H1 (cell line): ENCODE measurements at regions of chr2 and their contacts with region 1.

Region 1: GRCh38 chr2:158006961-158007719 is 94.5 kb upstream of the UPP2 start:
- DNase-seq: no peak
- H3K4me3 ChIP-seq: no peak overlapping the region
- H3K27ac ChIP-seq: no peak overlapping the region
- H3K4me1 ChIP-seq: peaks cover 0 to 7% (median 4%) of the 10 kb centered on the region in 4 experiments; a peak in 2 of 7 replicates
- H3K27me3 ChIP-seq: no peaks in the 10 kb centered on the region; a peak in 1 of 7 replicates
- CTCF ChIP-seq: peak in 2 of 3 experiments; percentile 30 to 41; a peak in 3 of 4 replicates
- EP300 ChIP-seq: no peak
- POLR2A ChIP-seq: no peak
- RAD21 ChIP-seq: peak; percentile 30 to 41; a peak in 2 of 4 replicates

Region 2: DNA sequence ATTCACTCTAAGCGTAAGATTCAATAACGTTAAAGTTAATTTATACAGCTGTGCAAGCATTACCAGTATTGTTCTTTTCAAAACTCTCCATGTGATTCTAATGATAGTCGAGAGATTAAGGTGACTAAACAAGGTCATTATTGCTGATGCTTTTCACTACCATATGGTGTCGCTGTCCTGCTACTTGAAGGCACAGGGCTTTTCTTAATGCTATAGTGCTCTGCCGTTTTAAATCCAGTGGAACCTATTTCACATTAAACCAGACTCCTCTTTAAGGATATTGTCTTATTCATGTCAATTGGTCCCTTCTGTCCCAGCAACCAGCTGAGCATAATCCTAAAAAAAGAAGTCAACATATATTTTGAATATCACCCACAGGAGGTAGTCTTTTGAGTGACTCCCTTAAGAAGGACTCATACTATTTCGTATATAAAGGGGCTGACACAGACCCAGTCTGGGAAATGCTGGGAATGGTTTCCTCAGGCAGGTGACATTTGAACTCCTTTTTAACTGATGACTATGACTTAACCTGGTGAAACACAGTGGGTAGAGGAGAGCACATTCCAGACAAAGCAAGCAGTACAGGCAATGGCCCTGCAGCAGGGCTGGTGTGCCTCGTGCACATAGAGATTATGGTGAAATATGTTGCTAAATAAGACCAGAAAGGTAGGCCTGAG is 509.4 kb before region 1 on chr2:
- CTCF ChIA-PET with region 1: interaction called, 13 read pairs
- POLR2A ChIA-PET with region 1: no interaction called
- DNase-seq: no peak
- H3K4me3 ChIP-seq: no peak overlapping the region
- H3K27ac ChIP-seq: no peak overlapping the region
- H3K4me1 ChIP-seq: no peaks in the 10 kb centered on the region
- H3K27me3 ChIP-seq: no peaks in the 10 kb centered on the region
- CTCF ChIP-seq: peak in 2 of 3 experiments; percentile 75 to 87; a peak in 3 of 4 replicates
- EP300 ChIP-seq: no peak
- POLR2A ChIP-seq: no peak
- RAD21 ChIP-seq: peak; percentile 91 to 93

Region 3: GRCh38 chr2:157777427-157777826 is 229.7 kb before region 1 on chr2:
- CTCF ChIA-PET with region 1: interaction called, 28 read pairs
- POLR2A ChIA-PET with region 1: interaction called, 4 read pairs
- DNase-seq: no peak
- H3K4me3 ChIP-seq: no peak overlapping the region
- H3K27ac ChIP-seq: no peak overlapping the region
- H3K4me1 ChIP-seq: 0 out of 7 replicates have a peak, but pooled peaks cover 0 to 2% (median 0%) of the 10 kb centered on the region in 4 experiments
- H3K27me3 ChIP-seq: no peaks in the 10 kb centered on the region
- CTCF ChIP-seq: peak in 2 of 3 experiments; percentile 44 to 50; a peak in 3 of 4 replicates
- EP300 ChIP-seq: no peak
- POLR2A ChIP-seq: no peak
- RAD21 ChIP-seq: peak; percentile 80

Region 4: GRCh38 chr2:157784169-157784822 is 222.8 kb before region 1 on chr2:
- CTCF ChIA-PET with region 1: interaction called, 28 read pairs
- POLR2A ChIA-PET with region 1: no interaction called
- DNase-seq: no peak
- H3K4me3 ChIP-seq: no peak overlapping the region
- H3K27ac ChIP-seq: no peak overlapping the region
- H3K4me1 ChIP-seq: peaks cover 0 to 21% (median 5%) of the 10 kb centered on the region in 4 experiments; a peak in 3 of 7 replicates
- H3K27me3 ChIP-seq: no peaks in the 10 kb centered on the region
- CTCF ChIP-seq: no peak
- EP300 ChIP-seq: no peak
- POLR2A ChIP-seq: no peak
- RAD21 ChIP-seq: no peak

Region 5: GRCh38 chr2:157995117-157995516 is 12.0 kb before region 1 on chr2:
- CTCF ChIA-PET with region 1: interaction called, 15 read pairs
- POLR2A ChIA-PET with region 1: no interaction called
- DNase-seq: no peak
- H3K4me3 ChIP-seq: no peak overlapping the region
- H3K27ac ChIP-seq: no peak overlapping the region
- H3K4me1 ChIP-seq: no peaks in the 10 kb centered on the region
- H3K27me3 ChIP-seq: peaks cover 0 to 1% (median 0%) of the 10 kb centered on the region in 4 experiments; a peak in 2 of 7 replicates
- CTCF ChIP-seq: no peak
- EP300 ChIP-seq: no peak
- POLR2A ChIP-seq: no peak
- RAD21 ChIP-seq: no peak

Region 6: GRCh38 chr2:158024288-158024898 is 17.3 kb after region 1 on chr2:
- CTCF ChIA-PET with region 1: interaction called, 15 read pairs
- POLR2A ChIA-PET with region 1: no interaction called
- DNase-seq: peak in 1 of 2 experiments; percentile 79
- H3K4me3 ChIP-seq: no peak overlapping the region
- H3K27ac ChIP-seq: no peak overlapping the region
- H3K4me1 ChIP-seq: no peaks in the 10 kb centered on the region
- H3K27me3 ChIP-seq: peaks cover 0 to 4% (median 0%) of the 10 kb centered on the region in 4 experiments; a peak in 1 of 7 replicates
- CTCF ChIP-seq: peak; percentile 57 to 69 (median 68)
- EP300 ChIP-seq: no peak
- POLR2A ChIP-seq: no peak
- RAD21 ChIP-seq: peak; percentile 79 to 87

Region 7: GRCh38 chr2:158072361-158072760 is 65.2 kb after region 1 on chr2:
- CTCF ChIA-PET with region 1: no interaction called
- POLR2A ChIA-PET with region 1: no interaction called
- DNase-seq: no peak
- H3K4me3 ChIP-seq: no peak overlapping the region
- H3K27ac ChIP-seq: no peak overlapping the region
- H3K4me1 ChIP-seq: no peaks in the 10 kb centered on the region
- H3K27me3 ChIP-seq: no peaks in the 10 kb centered on the region
- CTCF ChIP-seq: no peak
- EP300 ChIP-seq: no peak
- POLR2A ChIP-seq: no peak
- RAD21 ChIP-seq: no peak